ENCODE measurements at regions of chr9 and their contacts with region 1.

Region 1: DNA sequence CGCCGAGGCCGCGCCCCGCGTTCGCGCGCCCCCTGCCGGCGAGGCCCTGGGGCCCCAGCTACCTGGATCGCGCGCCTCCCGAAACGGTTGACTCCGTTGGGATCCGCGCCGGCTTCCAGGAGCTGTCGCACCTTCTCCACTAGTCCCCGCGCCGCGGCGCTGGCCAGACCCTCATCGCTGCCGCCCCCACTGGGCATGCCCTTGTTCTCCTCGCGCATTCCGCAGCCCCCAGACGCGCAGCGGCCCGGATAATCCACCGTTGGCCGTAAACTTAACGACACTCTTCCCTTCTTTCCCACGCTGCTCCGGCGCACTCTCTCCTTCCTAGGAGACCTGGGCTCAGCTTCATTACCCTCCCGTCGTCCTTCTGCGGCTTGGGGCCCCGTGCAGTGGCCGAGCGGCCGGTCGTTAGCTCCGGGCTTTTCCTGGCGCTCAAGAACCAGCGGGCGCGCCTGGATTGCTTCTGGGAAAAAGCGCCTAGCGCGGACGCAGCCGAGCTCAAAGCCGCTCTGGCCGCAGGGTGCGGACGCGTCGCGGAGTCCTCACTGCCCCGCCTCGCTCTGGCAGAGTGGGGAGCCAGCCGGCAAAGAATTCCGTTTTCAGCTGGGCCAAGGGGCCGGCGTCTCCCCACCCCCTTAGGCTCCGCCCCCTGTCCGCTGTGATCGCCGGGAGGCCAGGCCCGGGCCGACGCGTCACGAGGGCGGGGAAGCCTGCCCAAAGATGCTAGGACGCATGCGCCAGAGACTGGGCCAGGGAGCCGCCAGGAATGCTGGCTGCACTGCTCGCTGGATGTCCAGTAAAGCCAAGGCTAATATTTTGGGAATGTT is at the start of gene CDKN2B:
- DNase-seq: peak; percentile 80
- ATAC-seq: peak; percentile 89
- H3K4me3 ChIP-seq: peak within 1 kb of the TSS; percentile 71 to 80
- H3K27ac ChIP-seq: peak within 1 kb of the TSS; percentile 61
- H3K4me1 ChIP-seq: peaks cover 5 to 6% of the 10 kb centered on the region in 2 experiments; a peak in 3 of 4 replicates
- H3K27me3 ChIP-seq: no peaks in the 10 kb centered on the region
- CTCF ChIP-seq: peak; percentile 82 to 98 (median 90)
- POLR2A ChIP-seq: peak; percentile 65
- RAD21 ChIP-seq: peak; percentile 77
- total RNA-seq, gene CDKN2B: 9.8 TPM

Region 2: GRCh38 chr9:21812946-21813568 is 195.9 kb before region 1 on chr9:
- CTCF ChIA-PET with region 1: interaction called, 41 read pairs
- POLR2A ChIA-PET with region 1: interaction called, 7 read pairs
- RAD21 ChIA-PET with region 1: interaction called in 1 of 2 experiments, 6 read pairs
- intact Hi-C with region 1: loop called (anchors 2 kb)
- DNase-seq: no peak
- ATAC-seq: peak; percentile 77
- H3K4me3 ChIP-seq: no peak overlapping the region
- H3K27ac ChIP-seq: peak overlapping the region; percentile 27
- H3K4me1 ChIP-seq: peaks cover 5 to 39% of the 10 kb centered on the region in 2 experiments; a peak in 3 of 4 replicates
- H3K27me3 ChIP-seq: no peaks in the 10 kb centered on the region
- CTCF ChIP-seq: peak; percentile 64 to 93 (median 87); a peak in 5 of 6 replicates
- POLR2A ChIP-seq: no peak
- RAD21 ChIP-seq: peak; percentile 88

Region 3: GRCh38 chr9:21995177-21996086 is 13.5 kb before region 1 on chr9:
- CTCF ChIA-PET with region 1: interaction called, 36 read pairs
- POLR2A ChIA-PET with region 1: interaction called, 7 read pairs
- RAD21 ChIA-PET with region 1: no interaction called
- intact Hi-C with region 1: no loop called
- DNase-seq: peak; percentile 56
- ATAC-seq: peak; percentile 72
- H3K4me3 ChIP-seq: peak overlapping the region; percentile 79 to 81
- H3K27ac ChIP-seq: peak overlapping the region; percentile 89
- H3K4me1 ChIP-seq: peaks cover 4 to 19% of the 10 kb centered on the region in 2 experiments; a peak in 3 of 4 replicates
- H3K27me3 ChIP-seq: no peaks in the 10 kb centered on the region
- CTCF ChIP-seq: peak in 1 of 3 experiments; percentile 22; a peak in 1 of 6 replicates
- POLR2A ChIP-seq: no peak
- RAD21 ChIP-seq: peak; percentile 33; the same call in 1 of the 2 replicates

Region 4: DNA sequence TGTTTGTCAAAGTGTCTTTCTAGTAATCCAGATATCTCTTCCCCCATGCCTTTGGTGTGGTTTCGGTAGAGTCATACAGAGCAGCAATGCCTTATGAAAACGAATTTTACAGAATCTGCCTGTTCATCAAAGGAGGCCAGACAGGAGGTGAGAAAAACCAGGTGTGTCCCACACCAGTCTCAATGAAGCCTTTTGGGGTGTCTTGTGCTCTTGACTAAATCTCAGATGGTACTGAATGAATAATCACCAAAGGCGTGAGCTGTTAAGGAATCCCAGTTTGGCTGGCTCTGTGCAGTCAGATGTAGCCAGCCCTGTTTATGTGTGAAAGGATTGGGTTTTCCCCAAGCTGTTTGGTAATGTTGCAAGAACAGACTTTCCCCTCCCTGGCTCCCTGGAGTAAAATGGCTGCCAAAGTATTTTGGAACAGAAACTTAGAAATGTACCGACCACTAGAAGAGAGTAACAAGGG is 71.0 kb after region 1 on chr9:
- CTCF ChIA-PET with region 1: interaction called, 5 read pairs
- POLR2A ChIA-PET with region 1: no interaction called
- RAD21 ChIA-PET with region 1: no interaction called
- intact Hi-C with region 1: loop called (anchors 1 kb)
- DNase-seq: no peak
- ATAC-seq: no peak
- H3K4me3 ChIP-seq: no peak overlapping the region
- H3K27ac ChIP-seq: no peak overlapping the region
- H3K4me1 ChIP-seq: peaks cover 7 to 13% of the 10 kb centered on the region in 2 experiments
- H3K27me3 ChIP-seq: no peaks in the 10 kb centered on the region
- CTCF ChIP-seq: no peak
- POLR2A ChIP-seq: no peak
- RAD21 ChIP-seq: no peak

Region 5: GRCh38 chr9:22211593-22212360 is 202.8 kb after region 1 on chr9:
- CTCF ChIA-PET with region 1: interaction called, 6 read pairs
- POLR2A ChIA-PET with region 1: interaction called, 5 read pairs
- RAD21 ChIA-PET with region 1: interaction called in 1 of 2 experiments, 3 read pairs
- intact Hi-C with region 1: loop called (anchors 5 kb)
- DNase-seq: peak; percentile 79
- ATAC-seq: peak; percentile 86
- H3K4me3 ChIP-seq: peak overlapping the region in 1 of 2 experiments; percentile 14; a peak in 1 of 4 replicates
- H3K27ac ChIP-seq: peak overlapping the region; percentile 52
- H3K4me1 ChIP-seq: peaks cover 56 to 57% of the 10 kb centered on the region in 2 experiments
- H3K27me3 ChIP-seq: no peaks in the 10 kb centered on the region
- CTCF ChIP-seq: no peak
- POLR2A ChIP-seq: no peak
- RAD21 ChIP-seq: peak; percentile 15

Region 6: GRCh38 chr9:22244141-22245011 is 235.4 kb after region 1 on chr9:
- CTCF ChIA-PET with region 1: interaction called, 23 read pairs
- POLR2A ChIA-PET with region 1: interaction called, 10 read pairs
- RAD21 ChIA-PET with region 1: interaction called in 1 of 2 experiments, 6 read pairs
- intact Hi-C with region 1: loop called (anchors 5 kb)
- DNase-seq: peak; percentile 40
- ATAC-seq: peak; percentile 89
- H3K4me3 ChIP-seq: no peak overlapping the region
- H3K27ac ChIP-seq: no peak overlapping the region
- H3K4me1 ChIP-seq: peaks cover 8% of the 10 kb centered on the region in 2 experiments; a peak in 3 of 4 replicates
- H3K27me3 ChIP-seq: peaks cover 3% of the 10 kb centered on the region; the same call in 1 of the 2 replicates
- CTCF ChIP-seq: peak; percentile 53 to 63 (median 57); a peak in 5 of 6 replicates
- POLR2A ChIP-seq: no peak
- RAD21 ChIP-seq: peak; percentile 68

Measured in HCT116 (cell line).